GM13976 (cell line): ENCODE measurements at regions of chr12 and their contacts with region 1.

Region 1: DNA sequence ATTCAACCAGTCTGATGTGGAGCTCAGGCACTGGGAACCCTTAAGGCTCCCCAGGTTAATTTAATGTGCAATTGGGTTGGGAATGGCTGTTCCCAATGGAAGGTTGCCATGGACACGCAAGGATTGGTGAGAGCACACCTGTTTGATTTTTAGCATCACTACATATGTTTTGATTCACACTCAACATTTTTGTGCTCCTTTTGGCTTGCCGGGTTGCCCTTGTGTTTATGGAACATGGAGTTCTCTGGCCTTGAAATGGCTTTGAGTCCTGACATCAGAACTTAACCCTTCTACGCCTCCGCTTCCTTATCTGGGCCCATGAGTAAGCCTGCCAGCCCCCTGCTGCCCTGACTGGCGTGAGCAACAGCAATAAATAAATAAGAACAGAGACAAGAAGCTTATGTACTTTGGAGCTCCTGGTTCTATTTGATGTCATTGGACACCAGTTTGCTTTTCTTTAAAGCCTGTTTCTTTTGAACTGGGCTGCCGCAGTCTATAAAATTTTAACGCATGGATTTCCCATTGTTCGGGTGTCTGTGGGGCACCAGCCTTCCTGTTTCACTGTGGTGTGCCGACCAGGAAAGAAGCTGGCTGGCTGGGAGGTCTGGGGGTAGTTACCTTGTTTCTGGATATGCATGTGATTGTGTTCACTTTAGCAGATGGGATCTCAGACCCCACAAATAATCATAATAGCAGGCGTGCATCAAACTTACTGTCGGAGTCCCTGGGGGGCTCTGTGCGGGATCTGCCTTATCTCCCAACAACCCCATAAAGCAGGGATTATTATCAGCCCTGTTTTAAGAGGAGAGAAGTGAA is 27.8 kb downstream of the TBX3 start:
- DNase-seq: no peak
- CTCF ChIP-seq: no peak

Region 2: GRCh38 chr12:114030451-114030850 is 625.7 kb before region 1 on chr12:
- in situ Hi-C with region 1: no loop called
- DNase-seq: no peak
- CTCF ChIP-seq: no peak

Region 3: GRCh38 chr12:114826244-114826643 is 170.1 kb after region 1 on chr12:
- in situ Hi-C with region 1: no loop called
- DNase-seq: no peak
- CTCF ChIP-seq: no peak

Region 4: GRCh38 chr12:115916910-115917668 is 1260.9 kb after region 1 on chr12:
- in situ Hi-C with region 1: loop called (anchors 10 kb)
- DNase-seq: peak; percentile 86
- CTCF ChIP-seq: peak; percentile 96